HepG2 (cell line): ENCODE measurements at regions of chr3 and their contacts with region 1.

Region 1: DNA sequence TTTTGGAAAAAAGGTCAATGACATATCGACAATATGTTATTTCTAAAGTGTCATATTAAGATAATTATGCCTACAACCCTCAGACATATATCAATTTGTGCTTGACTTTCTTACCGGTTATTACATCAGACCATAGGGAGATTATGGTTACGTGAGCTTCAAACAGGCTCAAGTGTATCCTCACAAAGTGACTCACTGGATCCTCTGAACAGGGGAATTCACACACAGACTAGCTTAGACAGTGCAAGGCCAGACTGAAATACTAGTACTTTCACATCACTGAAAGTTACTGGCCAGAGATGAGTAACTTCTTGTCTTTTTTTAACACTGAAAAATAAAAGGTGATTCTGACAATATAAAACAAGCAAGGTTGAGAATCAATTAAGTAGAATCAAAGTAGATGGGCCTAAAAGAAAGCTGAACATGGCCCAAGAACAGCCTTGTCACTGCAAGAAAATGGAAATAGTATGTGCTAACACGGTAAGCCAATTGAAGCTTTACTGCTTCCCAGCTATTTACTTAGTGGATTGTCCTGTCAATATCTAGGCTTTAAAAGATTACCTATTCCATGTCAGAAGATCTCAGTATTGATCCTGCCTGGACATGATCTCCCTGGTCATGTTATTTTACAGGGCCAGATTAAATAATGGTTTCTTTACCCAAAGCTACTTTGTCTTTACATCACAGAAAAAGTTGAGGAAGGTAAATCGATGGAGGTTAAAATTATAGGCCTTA is 848.6 kb downstream of the ROBO1 start:
- DNase-seq: peak; percentile 73
- ATAC-seq: peak; percentile 96
- H3K4me3 ChIP-seq: no peak overlapping the region
- H3K27ac ChIP-seq: peak overlapping the region; percentile 65
- H3K4me1 ChIP-seq: peaks cover 40% of the 10 kb centered on the region
- H3K27me3 ChIP-seq: no peaks in the 10 kb centered on the region
- CTCF ChIP-seq: no peak
- EP300 ChIP-seq: peak in 1 of 2 experiments; percentile 59; a peak in 2 of 4 replicates
- POLR2A ChIP-seq: no peak
- RAD21 ChIP-seq: no peak

Region 2: DNA sequence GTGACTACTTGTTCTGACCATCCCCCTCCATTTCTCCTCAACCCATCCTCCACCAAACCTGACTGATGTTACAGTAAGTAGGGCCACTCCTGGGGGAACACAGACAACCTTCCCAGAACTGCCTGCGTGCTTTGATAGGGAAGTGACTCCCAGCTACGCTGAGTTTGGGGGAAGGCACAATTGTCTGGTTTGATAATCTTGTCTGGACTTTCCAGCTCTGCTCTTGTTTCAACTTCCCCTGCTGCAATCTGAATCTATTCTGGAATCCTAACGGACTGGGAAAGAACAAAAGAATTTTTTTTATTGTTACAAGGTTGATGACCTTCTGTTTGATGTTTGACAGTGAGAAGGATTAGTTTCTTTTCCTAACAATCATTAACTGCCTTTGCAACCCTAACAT is 47.0 kb before region 1 on chr3:
- CTCF ChIA-PET with region 1: no interaction called
- POLR2A ChIA-PET with region 1: interaction called, 10 read pairs
- in situ Hi-C with region 1: no loop called
- intact Hi-C with region 1: loop called (anchors 5 kb)
- DNase-seq: peak; percentile 89
- ATAC-seq: peak; percentile 92
- H3K4me3 ChIP-seq: peak overlapping the region in 2 of 3 experiments; percentile 31 to 32; a peak in 2 of 6 replicates
- H3K27ac ChIP-seq: peak overlapping the region; percentile 72
- H3K4me1 ChIP-seq: peaks cover 83% of the 10 kb centered on the region
- H3K27me3 ChIP-seq: no peaks in the 10 kb centered on the region
- CTCF ChIP-seq: no peak
- EP300 ChIP-seq: peak in 1 of 2 experiments; percentile 82; a peak in 2 of 4 replicates
- POLR2A ChIP-seq: no peak
- RAD21 ChIP-seq: no peak

Region 3: GRCh38 chr3:78951339-78951945 is 32.3 kb after region 1 on chr3:
- CTCF ChIA-PET with region 1: no interaction called
- POLR2A ChIA-PET with region 1: no interaction called
- in situ Hi-C with region 1: no loop called
- intact Hi-C with region 1: no loop called
- DNase-seq: no peak
- ATAC-seq: no peak
- H3K4me3 ChIP-seq: no peak overlapping the region
- H3K27ac ChIP-seq: no peak overlapping the region
- H3K4me1 ChIP-seq: peaks cover 12% of the 10 kb centered on the region; the same call in 1 of the 2 replicates
- H3K27me3 ChIP-seq: no peaks in the 10 kb centered on the region
- CTCF ChIP-seq: no peak
- EP300 ChIP-seq: no peak
- POLR2A ChIP-seq: no peak
- RAD21 ChIP-seq: no peak

Region 4: DNA sequence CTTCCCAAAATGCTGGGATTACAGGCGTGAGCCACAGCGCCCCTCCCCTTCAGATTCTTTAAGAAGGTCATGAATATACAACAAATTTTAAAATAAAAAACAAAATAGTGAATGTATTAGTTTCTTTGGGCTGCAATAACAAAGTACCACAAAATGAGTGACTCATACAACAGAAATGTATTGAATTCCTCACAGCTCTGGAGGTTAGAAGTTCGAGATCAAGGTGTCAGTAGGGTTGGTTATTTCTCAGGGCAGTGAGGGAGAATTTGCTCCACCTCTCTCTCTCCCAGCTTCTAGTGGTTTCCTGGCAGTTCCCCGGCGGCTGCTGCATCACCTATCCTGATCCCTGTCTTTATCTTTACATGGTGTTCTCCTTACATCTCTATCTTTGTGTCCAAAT is 44.6 kb after region 1 on chr3:
- CTCF ChIA-PET with region 1: no interaction called
- POLR2A ChIA-PET with region 1: no interaction called
- in situ Hi-C with region 1: no loop called
- intact Hi-C with region 1: no loop called
- DNase-seq: no peak
- ATAC-seq: no peak
- H3K4me3 ChIP-seq: no peak overlapping the region
- H3K27ac ChIP-seq: no peak overlapping the region
- H3K4me1 ChIP-seq: no peaks in the 10 kb centered on the region
- H3K27me3 ChIP-seq: no peaks in the 10 kb centered on the region
- CTCF ChIP-seq: no peak
- EP300 ChIP-seq: no peak
- POLR2A ChIP-seq: no peak
- RAD21 ChIP-seq: no peak

Region 5: GRCh38 chr3:78974181-78974790 is 55.1 kb after region 1 on chr3:
- CTCF ChIA-PET with region 1: no interaction called
- POLR2A ChIA-PET with region 1: interaction called, 6 read pairs
- in situ Hi-C with region 1: no loop called
- intact Hi-C with region 1: loop called (anchors 2 kb)
- DNase-seq: no peak
- ATAC-seq: no peak
- H3K4me3 ChIP-seq: no peak overlapping the region
- H3K27ac ChIP-seq: no peak overlapping the region
- H3K4me1 ChIP-seq: peaks cover 55% of the 10 kb centered on the region
- H3K27me3 ChIP-seq: no peaks in the 10 kb centered on the region
- CTCF ChIP-seq: no peak
- EP300 ChIP-seq: no peak
- POLR2A ChIP-seq: no peak
- RAD21 ChIP-seq: no peak

Region 6: GRCh38 chr3:79111375-79112052 is 192.3 kb after region 1 on chr3:
- CTCF ChIA-PET with region 1: no interaction called
- POLR2A ChIA-PET with region 1: no interaction called
- in situ Hi-C with region 1: no loop called
- intact Hi-C with region 1: no loop called
- DNase-seq: no peak
- ATAC-seq: no peak
- H3K4me3 ChIP-seq: no peak overlapping the region
- H3K27ac ChIP-seq: no peak overlapping the region
- H3K4me1 ChIP-seq: no peaks in the 10 kb centered on the region
- H3K27me3 ChIP-seq: no peaks in the 10 kb centered on the region; a peak in 1 of 5 replicates
- CTCF ChIP-seq: no peak
- EP300 ChIP-seq: no peak
- POLR2A ChIP-seq: no peak
- RAD21 ChIP-seq: no peak